ENCODE measurements at regions of chr19 and their contacts with region 1.

Region 1: GRCh38 chr19:45615795-45616708 is 14.0 kb upstream of the GPR4 start:
- DNase-seq: peak; percentile 48
- ATAC-seq: peak; percentile 91
- H3K4me3 ChIP-seq: no peak overlapping the region
- H3K27ac ChIP-seq: no peak overlapping the region
- H3K4me1 ChIP-seq: peaks cover 18% of the 10 kb centered on the region
- H3K27me3 ChIP-seq: no peaks in the 10 kb centered on the region
- CTCF ChIP-seq: no peak
- EP300 ChIP-seq: no peak
- POLR2A ChIP-seq: 0 out of 2 replicates have a peak, but pooled peaks have one; percentile 29
- RAD21 ChIP-seq: no peak

Region 2: DNA sequence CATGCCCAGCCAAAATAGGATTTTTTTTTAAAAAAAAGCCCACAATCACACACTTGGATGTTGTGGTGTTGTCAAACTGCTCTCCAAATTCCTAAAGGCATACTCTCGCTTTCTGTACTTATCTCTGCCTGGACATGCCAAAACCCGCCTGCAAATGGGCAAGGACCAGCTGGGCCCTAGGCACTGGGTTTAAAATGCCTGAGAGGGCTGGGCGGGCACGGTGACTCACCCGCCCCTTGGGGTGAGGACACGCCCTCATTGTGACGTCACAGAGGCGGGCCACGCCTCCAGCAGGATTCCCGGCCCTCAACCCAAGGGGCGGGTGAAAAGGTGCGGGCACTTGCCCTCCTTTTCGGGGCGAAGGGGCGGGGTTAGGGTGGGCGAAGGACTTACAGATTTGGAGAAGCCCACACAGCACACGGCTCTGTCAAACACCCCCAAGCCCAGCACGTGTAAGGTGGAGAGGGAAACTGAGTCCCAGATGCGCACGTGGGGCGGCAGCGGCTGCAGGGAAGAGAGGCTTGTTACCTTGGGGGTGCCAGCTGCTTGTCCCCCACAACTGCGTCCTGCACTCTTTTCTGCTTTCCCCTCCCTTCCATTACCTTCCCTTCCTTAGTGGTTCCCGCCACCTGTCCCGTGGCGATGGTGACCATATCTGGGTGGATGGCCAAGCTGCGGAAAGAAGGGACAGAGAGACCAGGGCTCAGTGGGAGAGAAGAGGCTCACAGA is 16.6 kb after region 1 on chr19:
- CTCF ChIA-PET with region 1: interaction called, 4 read pairs
- POLR2A ChIA-PET with region 1: interaction called, 14 read pairs
- RAD21 ChIA-PET with region 1: no interaction called
- SMC1A ChIA-PET with region 1: interaction called, 5 read pairs
- in situ Hi-C with region 1: no loop called
- intact Hi-C with region 1: no loop called
- DNase-seq: no peak
- ATAC-seq: peak; percentile 67
- H3K4me3 ChIP-seq: no peak overlapping the region
- H3K27ac ChIP-seq: no peak overlapping the region
- H3K4me1 ChIP-seq: peaks cover 8% of the 10 kb centered on the region
- H3K27me3 ChIP-seq: no peaks in the 10 kb centered on the region
- CTCF ChIP-seq: no peak
- EP300 ChIP-seq: no peak
- POLR2A ChIP-seq: no peak
- RAD21 ChIP-seq: no peak

Region 3: DNA sequence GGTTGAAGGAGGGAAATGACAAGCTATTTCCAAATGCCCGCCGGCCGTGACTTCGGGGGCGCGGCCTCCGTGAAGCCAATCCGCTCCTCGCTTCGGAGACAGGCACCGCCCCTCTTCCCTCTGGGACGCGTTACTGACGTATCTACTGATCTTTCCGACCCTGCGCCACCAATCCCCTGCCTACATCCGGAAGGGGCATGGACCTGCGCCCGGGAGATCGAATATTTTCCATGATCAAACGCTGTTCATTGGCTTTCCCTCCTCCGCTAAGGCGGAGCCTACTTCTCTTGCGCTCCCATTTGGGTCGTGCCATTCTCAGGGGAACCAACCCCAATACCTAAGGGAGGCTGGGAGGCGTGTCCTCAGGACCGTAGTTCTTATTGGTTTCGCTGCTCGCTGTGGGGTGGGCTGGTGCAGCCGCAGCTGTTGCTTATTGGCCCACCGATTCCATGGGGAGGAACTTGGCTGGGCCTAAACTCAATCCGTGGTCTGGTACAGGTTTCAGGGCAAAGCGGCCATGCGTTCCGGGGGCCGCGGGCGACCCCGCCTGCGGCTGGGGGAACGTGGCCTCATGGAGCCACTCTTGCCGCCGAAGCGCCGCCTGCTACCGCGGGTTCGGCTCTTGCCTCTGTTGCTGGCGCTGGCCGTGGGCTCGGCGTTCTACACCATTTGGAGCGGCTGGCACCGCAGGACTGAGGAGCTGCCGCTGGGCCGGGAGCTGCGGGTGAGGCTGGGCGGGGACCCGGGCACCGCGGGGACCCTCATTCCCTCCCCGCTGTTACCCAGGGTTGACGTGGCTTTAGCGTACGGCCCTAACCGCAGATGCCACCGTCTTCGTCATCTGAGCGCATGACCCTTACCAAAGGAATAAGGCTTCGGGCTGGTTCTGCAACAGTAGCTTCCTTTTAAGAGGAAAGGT is 76.4 kb after region 1 on chr19 and contains the start of gene QPCTL:
- CTCF ChIA-PET with region 1: no interaction called
- POLR2A ChIA-PET with region 1: no interaction called
- RAD21 ChIA-PET with region 1: no interaction called
- SMC1A ChIA-PET with region 1: no interaction called
- in situ Hi-C with region 1: no loop called
- intact Hi-C with region 1: no loop called
- DNase-seq: peak; percentile 100
- ATAC-seq: peak; percentile 93
- H3K4me3 ChIP-seq: peak within 1 kb of the TSS; percentile 76
- H3K27ac ChIP-seq: peak within 1 kb of the TSS; percentile 82
- H3K4me1 ChIP-seq: peaks cover 10% of the 10 kb centered on the region
- H3K27me3 ChIP-seq: no peaks in the 10 kb centered on the region
- CTCF ChIP-seq: no peak
- EP300 ChIP-seq: peak; percentile 13 to 31; a peak in 1 of 4 replicates
- POLR2A ChIP-seq: peak; percentile 93
- RAD21 ChIP-seq: no peak
- polyA plus RNA-seq, gene QPCTL: 1.1 to 1.7 TPM